GM12878 (cell line): ENCODE measurements at regions of chr2 and their contacts with region 1.

Region 1: DNA sequence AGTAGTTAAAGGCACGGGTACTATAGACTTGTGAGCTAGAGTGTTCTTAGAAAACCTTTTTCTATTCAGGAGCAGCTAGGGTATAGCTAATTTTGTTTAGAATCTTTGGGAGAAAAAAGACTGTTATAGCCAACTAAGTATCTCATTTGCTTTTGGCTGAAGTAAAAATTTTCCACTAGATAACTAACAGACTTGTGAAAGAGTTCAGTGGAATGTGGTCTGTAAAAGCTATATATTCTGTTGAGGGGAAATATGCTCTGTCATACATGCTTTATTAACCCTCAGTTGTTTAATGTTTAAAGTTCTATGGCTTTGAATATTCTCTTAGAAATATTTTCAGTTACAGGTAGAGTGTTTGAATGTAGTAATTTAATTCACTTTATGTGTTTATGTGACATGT is 49.7 kb downstream of the RIF1 start:
- DNase-seq: no peak
- ATAC-seq: no peak
- H3K4me3 ChIP-seq: no peak overlapping the region
- H3K27ac ChIP-seq: no peak overlapping the region
- H3K4me1 ChIP-seq: no peaks in the 10 kb centered on the region
- H3K27me3 ChIP-seq: no peaks in the 10 kb centered on the region
- CTCF ChIP-seq: no peak
- EP300 ChIP-seq: no peak
- POLR2A ChIP-seq: no peak
- RAD21 ChIP-seq: no peak

Region 2: DNA sequence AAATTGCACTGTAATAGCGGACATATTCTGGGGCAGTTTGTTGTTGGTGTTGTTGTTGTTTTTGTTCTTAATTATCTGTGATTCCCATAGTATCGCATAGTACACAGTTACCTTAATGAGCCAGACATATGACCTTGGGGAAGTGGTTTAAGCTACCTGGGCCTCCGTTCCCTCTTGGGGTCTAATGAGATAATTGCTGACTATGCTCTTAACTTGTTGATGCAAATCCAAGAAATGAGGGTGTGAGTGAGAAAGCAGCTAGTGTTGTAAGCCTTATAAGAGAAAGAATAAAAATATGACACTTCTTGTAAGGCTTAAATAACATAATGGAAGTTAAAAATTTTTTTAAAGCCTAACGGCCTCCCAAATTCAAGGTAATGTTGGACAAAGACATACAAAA is 177.0 kb before region 1 on chr2:
- CTCF ChIA-PET with region 1: no interaction called
- POLR2A ChIA-PET with region 1: no interaction called
- RAD21 ChIA-PET with region 1: no interaction called
- SMC1A ChIA-PET with region 1: no interaction called
- in situ Hi-C with region 1: no loop called
- intact Hi-C with region 1: no loop called
- DNase-seq: no peak
- ATAC-seq: no peak
- H3K4me3 ChIP-seq: no peak overlapping the region
- H3K27ac ChIP-seq: no peak overlapping the region
- H3K4me1 ChIP-seq: no peaks in the 10 kb centered on the region
- H3K27me3 ChIP-seq: no peaks in the 10 kb centered on the region
- CTCF ChIP-seq: no peak
- EP300 ChIP-seq: no peak
- POLR2A ChIP-seq: no peak
- RAD21 ChIP-seq: no peak

Region 3: DNA sequence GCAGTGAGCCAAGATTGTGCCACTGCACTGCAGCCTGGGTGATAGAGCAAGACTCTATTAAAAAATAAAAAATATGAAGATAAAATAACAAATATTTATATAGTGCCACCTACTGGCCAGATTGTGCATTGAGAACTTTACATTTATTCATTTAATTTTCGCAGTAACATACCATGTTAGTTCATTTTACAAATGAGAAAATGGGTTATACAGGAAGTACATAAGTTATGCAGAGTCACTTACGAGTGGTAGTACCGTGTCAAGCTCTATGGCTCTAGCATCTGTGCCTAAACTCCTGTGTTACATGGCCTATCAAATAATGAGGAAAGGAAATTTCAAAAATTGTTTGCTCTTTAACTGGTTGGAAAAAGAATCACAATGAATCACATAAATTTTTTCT is 21.7 kb before region 1 on chr2:
- CTCF ChIA-PET with region 1: interaction called, 18 read pairs
- POLR2A ChIA-PET with region 1: no interaction called
- RAD21 ChIA-PET with region 1: interaction called, 3 read pairs
- SMC1A ChIA-PET with region 1: interaction called, 3 read pairs
- in situ Hi-C with region 1: no loop called
- intact Hi-C with region 1: no loop called
- DNase-seq: no peak
- ATAC-seq: peak; percentile 74
- H3K4me3 ChIP-seq: no peak overlapping the region
- H3K27ac ChIP-seq: no peak overlapping the region
- H3K4me1 ChIP-seq: no peaks in the 10 kb centered on the region
- H3K27me3 ChIP-seq: no peaks in the 10 kb centered on the region
- CTCF ChIP-seq: peak in 2 of 3 experiments; percentile 16 to 43; a peak in 4 of 6 replicates
- EP300 ChIP-seq: no peak
- POLR2A ChIP-seq: no peak
- RAD21 ChIP-seq: peak; percentile 16; the same call in 1 of the 2 replicates

Region 4: GRCh38 chr2:152657043-152657442 is 1197.7 kb after region 1 on chr2:
- CTCF ChIA-PET with region 1: no interaction called
- POLR2A ChIA-PET with region 1: no interaction called
- RAD21 ChIA-PET with region 1: no interaction called
- SMC1A ChIA-PET with region 1: no interaction called
- in situ Hi-C with region 1: loop called (anchors 25 kb)
- intact Hi-C with region 1: no loop called
- DNase-seq: no peak
- ATAC-seq: peak; percentile 82
- H3K4me3 ChIP-seq: no peak overlapping the region
- H3K27ac ChIP-seq: no peak overlapping the region
- H3K4me1 ChIP-seq: no peaks in the 10 kb centered on the region
- H3K27me3 ChIP-seq: no peaks in the 10 kb centered on the region
- CTCF ChIP-seq: no peak
- EP300 ChIP-seq: no peak
- POLR2A ChIP-seq: no peak
- RAD21 ChIP-seq: no peak

Region 5: DNA sequence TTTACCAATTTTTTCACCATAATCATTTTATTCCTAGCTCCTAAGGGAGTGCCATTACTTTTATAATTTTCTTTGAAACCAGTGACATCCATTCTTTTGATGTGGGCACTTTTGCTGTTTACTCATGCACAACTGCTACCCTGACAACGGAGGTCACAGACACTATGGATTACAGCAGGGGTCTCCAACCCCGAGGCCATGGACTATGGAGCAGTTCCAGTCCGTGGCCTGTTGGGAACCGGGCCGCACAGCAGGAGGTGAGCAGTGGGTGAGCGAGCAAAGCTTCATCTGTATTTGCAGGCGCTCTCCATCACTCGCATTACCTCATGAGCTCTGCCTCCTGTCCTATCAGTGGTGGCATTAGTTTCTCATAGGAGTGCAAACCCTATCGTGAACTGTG is 1223.3 kb after region 1 on chr2:
- CTCF ChIA-PET with region 1: no interaction called
- POLR2A ChIA-PET with region 1: interaction called, 10 read pairs
- RAD21 ChIA-PET with region 1: no interaction called
- SMC1A ChIA-PET with region 1: no interaction called
- in situ Hi-C with region 1: no loop called
- intact Hi-C with region 1: no loop called
- DNase-seq: no peak
- ATAC-seq: no peak; the same call in 2 of the 3 replicates
- H3K4me3 ChIP-seq: no peak overlapping the region
- H3K27ac ChIP-seq: no peak overlapping the region
- H3K4me1 ChIP-seq: no peaks in the 10 kb centered on the region
- H3K27me3 ChIP-seq: no peaks in the 10 kb centered on the region
- CTCF ChIP-seq: no peak
- EP300 ChIP-seq: no peak
- POLR2A ChIP-seq: no peak
- RAD21 ChIP-seq: no peak